Prostate gland (tissue), 2 donors: ENCODE measurements at regions of chr3 and their contacts with region 1.

Region 1: DNA sequence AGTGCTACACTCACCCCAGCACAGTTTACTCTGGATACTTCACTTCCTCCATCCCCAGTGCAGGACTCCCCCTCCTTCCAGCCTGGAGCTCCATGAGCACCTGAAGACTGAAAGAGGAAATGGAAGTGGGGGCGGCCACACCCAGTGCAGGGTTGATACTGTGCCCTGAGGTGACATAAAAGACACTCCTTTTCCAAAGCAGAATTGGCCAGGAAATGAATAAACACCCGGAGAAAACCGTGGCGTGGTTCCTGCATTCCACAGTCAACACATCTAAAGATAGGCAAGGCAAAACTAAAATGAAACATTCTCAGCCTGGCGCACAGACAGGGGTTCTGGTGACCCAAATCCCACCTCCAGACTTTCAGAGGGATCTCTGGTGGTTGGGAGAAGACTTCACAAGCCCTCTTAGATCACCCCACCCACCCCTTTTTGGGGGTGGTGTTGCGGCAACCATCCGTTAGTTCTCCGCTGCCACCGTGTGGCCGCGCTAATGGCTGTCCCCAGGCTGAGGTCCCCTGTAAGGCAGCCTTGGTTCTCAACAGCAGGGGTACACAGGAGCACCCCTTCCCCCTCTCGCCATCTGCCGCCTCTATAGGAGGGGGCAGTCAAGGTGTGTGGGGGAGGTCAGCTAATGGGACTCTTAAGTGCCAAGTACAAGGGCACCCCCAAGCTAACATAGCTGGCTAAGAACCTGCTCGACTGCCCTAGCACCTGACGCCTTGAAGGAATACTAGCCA is 2.5 kb upstream of the MST1R start:
- DNase-seq: peak; percentile 40
- H3K4me3 ChIP-seq: peak overlapping the region in 1 of 2 donors; percentile 15
- H3K27ac ChIP-seq: peak overlapping the region; percentile 46 to 58
- H3K4me1 ChIP-seq: peaks cover 2% of the 10 kb centered on the region
- H3K27me3 ChIP-seq: no peaks in the 10 kb centered on the region
- CTCF ChIP-seq: peak; percentile 14 to 84 (median 57)
- POLR2A ChIP-seq: no peak

Region 2: GRCh38 chr3:49327485-49327884 is 578.7 kb before region 1 on chr3:
- intact Hi-C with region 1: no loop called
- DNase-seq: no peak
- H3K4me3 ChIP-seq: no peak overlapping the region
- H3K27ac ChIP-seq: no peak overlapping the region
- H3K4me1 ChIP-seq: no peaks in the 10 kb centered on the region
- H3K27me3 ChIP-seq: no peaks in the 10 kb centered on the region
- CTCF ChIP-seq: peak in 1 of 4 experiments; percentile 25
- POLR2A ChIP-seq: no peak

Region 3: GRCh38 chr3:49703443-49703927 is 202.7 kb before region 1 on chr3:
- intact Hi-C with region 1: loop called (anchors 5 kb)
- DNase-seq: no peak
- H3K4me3 ChIP-seq: no peak overlapping the region
- H3K27ac ChIP-seq: no peak overlapping the region
- H3K4me1 ChIP-seq: no peaks in the 10 kb centered on the region
- H3K27me3 ChIP-seq: no peaks in the 10 kb centered on the region
- CTCF ChIP-seq: peak; percentile 52 to 88 (median 67)
- POLR2A ChIP-seq: no peak

Region 4: DNA sequence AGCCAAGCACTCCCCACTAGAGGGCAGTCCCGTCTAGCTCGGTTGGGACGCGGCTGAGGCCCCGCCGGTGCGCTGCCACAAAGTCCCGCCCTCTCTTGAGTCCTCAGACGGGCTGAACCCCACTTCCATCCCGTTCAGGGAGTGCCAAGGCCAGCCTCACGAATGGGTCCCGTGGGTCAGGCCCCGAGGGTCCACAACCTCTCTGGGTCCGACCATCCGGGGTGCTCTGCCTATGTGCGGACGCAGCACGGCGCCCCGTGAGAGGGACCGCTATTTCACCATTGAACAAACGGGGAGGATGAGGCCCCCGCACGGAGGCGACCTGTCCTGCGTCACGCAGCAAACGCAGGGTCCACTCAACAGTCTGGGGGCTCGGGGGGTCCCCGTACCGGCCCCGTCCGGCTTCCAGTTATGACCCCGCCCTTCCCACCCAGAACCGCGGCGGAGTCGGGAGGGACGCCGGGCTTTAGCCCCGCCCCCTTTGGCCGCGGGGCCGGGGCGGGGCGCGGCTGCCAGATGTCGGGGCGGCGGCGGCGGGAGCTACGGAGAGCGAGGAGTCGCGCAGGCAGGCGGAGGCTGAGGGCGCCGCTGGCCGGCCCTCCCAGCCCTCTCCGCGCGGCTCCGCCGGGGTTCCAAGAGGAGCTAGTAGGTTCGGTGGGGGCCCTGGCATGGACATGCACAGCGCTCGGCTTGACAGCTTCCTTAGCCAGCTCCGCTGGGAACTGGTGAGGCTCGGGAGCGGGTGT is 103.3 kb before region 1 on chr3 and contains the start of gene INKA1:
- intact Hi-C with region 1: loop called (anchors 2 kb)
- DNase-seq: peak; percentile 89
- H3K4me3 ChIP-seq: peak within 1 kb of the TSS; percentile 50 to 70
- H3K27ac ChIP-seq: peak within 1 kb of the TSS; percentile 85 to 89
- H3K4me1 ChIP-seq: peaks cover 21% of the 10 kb centered on the region
- H3K27me3 ChIP-seq: no peaks in the 10 kb centered on the region
- CTCF ChIP-seq: peak; percentile 73 to 96 (median 92)
- POLR2A ChIP-seq: peak; percentile 82
- total RNA-seq, gene INKA1: 4.0 to 8.1 TPM

Region 5: DNA sequence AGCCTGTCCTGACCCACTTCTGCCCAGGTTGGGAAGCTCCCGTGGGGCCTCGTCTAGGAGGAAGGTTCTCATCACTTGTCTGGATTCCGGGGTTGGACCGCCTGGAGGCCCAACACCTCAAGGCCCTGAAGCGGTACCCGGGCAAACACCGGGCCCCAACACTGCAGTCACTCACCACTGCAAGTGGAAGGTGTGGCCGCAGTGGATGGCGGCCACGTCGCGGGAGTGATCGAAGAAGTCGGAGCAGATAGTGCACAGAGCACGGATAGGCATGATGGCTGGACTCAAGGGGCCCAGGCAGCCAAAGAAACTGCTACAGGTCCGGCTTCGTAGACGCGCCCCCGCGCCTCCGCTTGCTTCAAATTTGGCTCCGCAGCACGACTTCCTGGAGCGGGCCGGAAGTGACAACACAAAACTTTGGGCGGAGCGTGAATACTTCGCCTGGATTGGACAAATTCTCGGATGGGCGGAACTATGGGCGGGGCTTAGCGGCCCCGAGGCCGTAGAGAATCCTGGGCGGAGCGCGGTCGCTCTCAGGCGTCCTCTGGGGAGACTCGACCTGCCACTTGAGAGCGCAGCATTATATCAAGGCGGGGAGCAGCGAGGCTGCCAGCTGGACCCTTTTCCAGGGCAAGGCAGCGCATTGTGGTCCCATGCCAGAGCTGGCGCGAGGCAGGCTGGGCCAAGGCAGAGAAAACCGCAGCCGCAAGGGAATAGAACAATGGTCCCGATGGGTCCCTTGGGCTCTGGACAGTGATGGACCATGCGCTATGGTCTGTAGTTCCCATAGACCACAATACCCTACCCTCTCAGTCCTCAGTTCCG is 49.8 kb before region 1 on chr3 and contains the start of gene TRAIP:
- intact Hi-C with region 1: loop called (anchors 5 kb)
- DNase-seq: peak; percentile 93
- H3K4me3 ChIP-seq: peak within 1 kb of the TSS; percentile 46 to 47
- H3K27ac ChIP-seq: peak within 1 kb of the TSS; percentile 68 to 80
- H3K4me1 ChIP-seq: no peaks in the 10 kb centered on the region
- H3K27me3 ChIP-seq: no peaks in the 10 kb centered on the region
- CTCF ChIP-seq: no peak
- POLR2A ChIP-seq: peak; percentile 53
- total RNA-seq, gene TRAIP: 2.8 to 7.7 TPM